ENCODE measurements at regions of chr3 and their contacts with region 1.

Region 1: GRCh38 chr3:187738331-187739093 is 6.8 kb downstream of the BCL6 start:
- DNase-seq: peak; percentile 83
- H3K4me3 Mint-ChIP-seq: peak overlapping the region; percentile 99
- H3K27ac Mint-ChIP-seq: peak overlapping the region; percentile 100
- H3K4me1 Mint-ChIP-seq: peaks cover 53% of the 10 kb centered on the region
- H3K27me3 Mint-ChIP-seq: peaks cover 7% of the 10 kb centered on the region

Region 2: DNA sequence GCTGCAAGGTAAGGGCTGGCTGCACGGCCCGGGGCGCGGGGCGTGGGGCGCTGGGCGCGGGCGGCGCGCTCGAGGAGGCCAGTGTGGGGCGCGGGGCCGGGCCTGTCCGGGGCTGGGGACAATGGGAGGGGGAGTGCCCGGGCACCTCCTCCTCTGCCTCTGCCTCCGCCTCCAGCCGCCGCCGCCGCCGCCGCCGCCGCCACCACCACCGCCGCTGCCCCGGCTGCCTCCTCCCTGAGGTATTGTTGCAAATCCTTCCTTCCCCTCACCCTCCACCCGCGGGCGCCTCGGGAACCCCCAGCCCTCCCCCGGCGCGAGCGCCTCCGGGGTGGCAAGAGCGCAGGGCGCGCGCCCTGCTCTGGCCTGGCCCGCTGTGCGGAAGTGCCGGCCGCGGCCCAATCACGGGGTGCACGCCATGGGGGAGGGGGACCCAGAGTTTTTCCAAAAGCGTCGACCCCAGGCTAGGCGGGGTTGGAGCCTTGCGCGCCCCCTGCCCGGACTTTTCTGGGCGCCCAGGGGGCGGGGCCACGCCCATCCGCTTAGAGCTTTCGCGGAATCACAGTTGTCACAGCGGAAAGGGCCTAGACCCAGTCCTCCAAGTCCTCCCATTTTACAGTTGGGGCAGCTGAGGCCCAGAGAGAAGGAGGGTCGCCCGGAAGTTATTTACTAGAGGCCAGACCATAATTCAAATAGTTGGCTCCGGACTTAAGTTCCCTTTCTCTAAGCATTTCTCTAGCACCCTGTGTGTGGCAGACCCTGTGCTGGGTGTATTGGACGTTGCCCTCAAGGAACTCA is 415.7 kb after region 1 on chr3 and contains the start of gene LPP:
- CTCF ChIA-PET with region 1: interaction called, 21 read pairs
- DNase-seq: peak; percentile 93
- H3K4me3 Mint-ChIP-seq: peak within 1 kb of the TSS; percentile 89
- H3K27ac Mint-ChIP-seq: peak within 1 kb of the TSS; percentile 96
- H3K4me1 Mint-ChIP-seq: peaks cover 64% of the 10 kb centered on the region
- H3K27me3 Mint-ChIP-seq: no peaks in the 10 kb centered on the region

Region 3: GRCh38 chr3:188749010-188749617 is 1010.6 kb after region 1 on chr3:
- CTCF ChIA-PET with region 1: interaction called, 41 read pairs
- DNase-seq: peak; percentile 68
- H3K4me3 Mint-ChIP-seq: no peak overlapping the region
- H3K27ac Mint-ChIP-seq: no peak overlapping the region
- H3K4me1 Mint-ChIP-seq: peaks cover 3% of the 10 kb centered on the region
- H3K27me3 Mint-ChIP-seq: no peaks in the 10 kb centered on the region

Region 4: GRCh38 chr3:188914552-188914951 is 1176.0 kb after region 1 on chr3:
- CTCF ChIA-PET with region 1: interaction called, 31 read pairs
- DNase-seq: no peak
- H3K4me3 Mint-ChIP-seq: no peak overlapping the region
- H3K27ac Mint-ChIP-seq: peak overlapping the region; percentile 64
- H3K4me1 Mint-ChIP-seq: peaks cover 42% of the 10 kb centered on the region
- H3K27me3 Mint-ChIP-seq: no peaks in the 10 kb centered on the region

Region 5: DNA sequence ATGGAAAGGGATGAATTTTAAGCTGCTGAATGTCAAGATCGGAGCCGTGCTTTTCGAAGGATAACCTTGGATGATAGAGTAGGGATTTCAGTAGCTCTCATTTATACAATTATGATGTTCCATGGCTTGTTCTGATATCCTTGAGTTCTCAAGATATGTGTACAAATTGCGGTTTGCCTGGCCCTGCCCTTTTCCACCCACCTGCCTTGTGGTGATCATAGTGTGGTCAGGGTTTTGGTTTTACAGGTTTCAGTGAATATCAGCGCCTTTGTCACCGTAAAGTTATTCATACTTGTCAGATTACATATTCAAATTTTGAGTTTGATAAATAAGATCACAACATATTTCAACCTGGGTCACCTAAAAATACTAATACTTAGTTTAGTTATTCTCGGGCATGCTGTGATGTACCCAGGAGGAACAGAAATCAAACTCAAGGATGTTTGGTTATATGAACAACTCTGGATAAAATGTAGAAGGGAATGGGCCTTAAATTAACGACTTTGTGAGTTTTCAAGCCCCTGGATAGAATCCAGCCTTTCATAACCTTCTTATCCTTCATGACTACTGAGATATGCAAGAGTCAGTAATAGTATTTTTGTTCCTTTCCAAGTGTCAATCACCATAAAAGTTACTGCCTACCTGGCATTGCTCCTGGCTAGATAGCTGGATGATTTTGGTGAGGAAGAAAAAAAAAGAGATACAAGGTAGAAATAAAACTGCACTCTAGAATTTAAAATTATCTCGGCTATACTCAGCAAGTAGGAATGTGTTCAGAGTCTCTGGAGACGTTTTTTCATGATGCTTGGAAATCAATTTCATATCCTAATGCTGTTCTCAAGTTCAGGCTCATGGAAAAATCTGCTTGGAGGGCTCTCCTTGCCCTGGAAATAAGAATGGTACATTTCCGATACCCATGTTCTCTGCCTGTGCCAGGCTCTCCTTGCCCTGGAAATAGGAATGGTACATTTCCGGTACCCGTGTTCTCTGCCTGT is 1224.0 kb after region 1 on chr3:
- CTCF ChIA-PET with region 1: interaction called, 331 read pairs
- DNase-seq: peak; percentile 23
- H3K4me3 Mint-ChIP-seq: no peak overlapping the region
- H3K27ac Mint-ChIP-seq: no peak overlapping the region
- H3K4me1 Mint-ChIP-seq: peaks cover 20% of the 10 kb centered on the region
- H3K27me3 Mint-ChIP-seq: peaks cover 7% of the 10 kb centered on the region

Region 6: DNA sequence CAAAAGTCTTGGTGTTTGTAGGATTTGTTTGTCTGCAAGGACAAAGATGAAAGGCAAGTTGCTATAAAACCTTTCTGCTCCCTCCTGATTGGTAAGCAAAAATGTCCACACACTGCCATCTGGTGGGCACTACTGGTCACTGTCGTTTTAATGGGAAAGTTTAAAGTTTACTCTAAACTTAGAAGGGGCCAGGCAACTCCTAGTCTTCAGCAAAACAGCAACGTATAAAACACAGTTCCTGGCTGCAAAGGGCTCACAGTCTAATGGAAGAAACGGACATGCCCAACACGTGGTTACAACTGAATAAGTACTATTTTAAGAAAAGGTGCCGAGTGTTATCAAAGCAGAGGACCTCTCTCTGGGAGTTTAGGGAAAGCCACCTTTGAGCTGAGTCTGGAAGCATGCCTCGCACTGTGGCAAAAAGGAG is 1409.6 kb after region 1 on chr3:
- CTCF ChIA-PET with region 1: interaction called, 112 read pairs
- DNase-seq: peak; percentile 79
- H3K4me3 Mint-ChIP-seq: no peak overlapping the region
- H3K27ac Mint-ChIP-seq: no peak overlapping the region
- H3K4me1 Mint-ChIP-seq: peaks cover 37% of the 10 kb centered on the region
- H3K27me3 Mint-ChIP-seq: peaks cover 7% of the 10 kb centered on the region